Naive thymus-derived CD8-positive, alpha-beta T cell (primary cell): ENCODE measurements at regions of chr11 and their contacts with region 1.

Region 1: GRCh38 chr11:575996-576768 is at the start of gene PHRF1:
- DNase-seq: peak; percentile 91 to 99 (median 96)
- ATAC-seq: peak; percentile 80 to 87
- H3K4me3 Mint-ChIP-seq: peak within 1 kb of the TSS; percentile 87 to 99 (median 97)
- H3K27ac Mint-ChIP-seq: peak within 1 kb of the TSS; percentile 93 to 99 (median 98)
- H3K4me1 Mint-ChIP-seq: peaks cover 25 to 55% (median 53%) of the 10 kb centered on the region in 4 donors
- H3K27me3 Mint-ChIP-seq: peaks cover 0 to 2% (median 0%) of the 10 kb centered on the region in 5 donors
- polyA plus RNA-seq, gene PHRF1: 3.5 to 19.8 (median 6.7) TPM

Region 2: DNA sequence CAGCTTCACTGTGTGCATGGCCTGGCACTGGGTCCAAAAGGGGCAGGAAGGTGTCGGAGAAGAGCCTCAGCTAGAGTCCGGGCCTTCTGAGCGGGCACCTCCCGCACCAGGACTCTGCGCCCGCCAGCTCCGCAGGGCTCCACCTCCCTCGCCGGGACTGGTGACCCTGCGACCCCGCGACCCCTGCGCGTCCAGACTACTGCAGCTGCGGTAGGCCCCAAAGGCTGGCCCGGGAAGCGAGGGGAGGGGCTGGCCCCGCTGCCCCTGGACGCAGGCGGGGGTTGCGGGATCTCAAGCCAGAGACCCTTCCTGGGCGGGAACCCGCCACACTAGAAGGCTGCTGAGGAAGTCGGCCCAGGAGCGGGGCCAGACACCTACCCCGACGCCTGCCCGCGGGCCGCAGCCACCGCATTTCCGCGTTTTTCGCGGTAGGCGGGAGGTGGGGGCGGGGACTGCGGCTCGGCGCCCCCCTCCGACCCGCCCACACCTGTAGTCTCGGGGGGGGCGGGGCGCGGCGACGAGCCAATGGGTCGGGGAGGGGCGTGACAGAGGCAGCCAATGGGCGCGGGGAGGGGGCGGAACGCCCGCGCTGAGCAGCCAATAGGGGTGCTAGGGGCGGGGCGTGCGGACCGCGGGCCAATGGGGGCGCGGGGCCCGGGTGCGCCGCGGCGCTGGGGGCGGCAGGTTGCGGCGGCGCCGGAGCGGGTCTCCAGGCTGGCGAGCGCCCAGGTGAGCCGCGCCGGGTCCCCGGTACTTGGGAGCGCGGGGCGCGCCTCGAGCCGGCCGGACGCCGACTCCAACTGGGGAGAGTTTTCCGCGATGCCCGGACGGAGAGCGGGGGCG is 15.7 kb before region 1 on chr11 and contains the starts of genes LMNTD2 and RASSF7:
- POLR2A ChIA-PET with region 1: interaction called, 47 read pairs
- DNase-seq: peak; percentile 91 to 97 (median 95)
- ATAC-seq: peak; percentile 89 to 92
- H3K4me3 Mint-ChIP-seq: peak within 1 kb of the TSS; percentile 82 to 91 (median 86)
- H3K27ac Mint-ChIP-seq: peak within 1 kb of the TSS; percentile 63 to 94 (median 84)
- H3K4me1 Mint-ChIP-seq: peaks cover 7 to 22% (median 17%) of the 10 kb centered on the region in 4 donors
- H3K27me3 Mint-ChIP-seq: no peaks in the 10 kb centered on the region
- polyA plus RNA-seq, gene LMNTD2: 0.96 to 1.9 (median 0.99) TPM
- polyA plus RNA-seq, gene RASSF7: 22.5 to 32.3 (median 24.2) TPM

Region 3: GRCh38 chr11:587978-588380 is 11.8 kb after region 1 on chr11:
- POLR2A ChIA-PET with region 1: interaction called, 48 read pairs
- DNase-seq: peak; percentile 35 to 88 (median 80)
- ATAC-seq: peak; percentile 95 to 98
- H3K4me3 Mint-ChIP-seq: peak overlapping the region; percentile 70 to 95 (median 86)
- H3K27ac Mint-ChIP-seq: peak overlapping the region; percentile 97 to 100 (median 100)
- H3K4me1 Mint-ChIP-seq: peaks cover 17 to 41% (median 27%) of the 10 kb centered on the region in 4 donors
- H3K27me3 Mint-ChIP-seq: no peaks in the 10 kb centered on the region

Region 4: GRCh38 chr11:615504-616319 is 39.5 kb after region 1 on chr11 and contains the start of gene IRF7:
- POLR2A ChIA-PET with region 1: interaction called, 42 read pairs
- DNase-seq: peak; percentile 67 to 92 (median 80)
- ATAC-seq: peak; percentile 77 to 82
- H3K4me3 Mint-ChIP-seq: peak within 1 kb of the TSS; percentile 86 to 96 (median 91)
- H3K27ac Mint-ChIP-seq: peak within 1 kb of the TSS; percentile 74 to 96 (median 94)
- H3K4me1 Mint-ChIP-seq: peaks cover 7 to 23% (median 19%) of the 10 kb centered on the region in 4 donors
- H3K27me3 Mint-ChIP-seq: no peaks in the 10 kb centered on the region
- polyA plus RNA-seq, gene IRF7: 19.8 to 38.6 (median 25.3) TPM

Region 5: GRCh38 chr11:695538-696248 is 119.5 kb after region 1 on chr11 and contains the start of gene TMEM80:
- POLR2A ChIA-PET with region 1: interaction called, 15 read pairs
- DNase-seq: peak in 9 of 10 donors; percentile 90 to 99 (median 97)
- ATAC-seq: peak; percentile 63 to 67
- H3K4me3 Mint-ChIP-seq: peak within 1 kb of the TSS; percentile 83 to 93 (median 86)
- H3K27ac Mint-ChIP-seq: peak within 1 kb of the TSS; percentile 89 to 98 (median 95)
- H3K4me1 Mint-ChIP-seq: peaks cover 30 to 61% (median 50%) of the 10 kb centered on the region in 4 donors
- H3K27me3 Mint-ChIP-seq: no peaks in the 10 kb centered on the region
- polyA plus RNA-seq, gene TMEM80: 22.2 to 44.6 (median 32.4) TPM